SK-N-SH (cell line): ENCODE measurements at regions of chr5 and their contacts with region 1.

Region 1: GRCh38 chr5:60295423-60295822 is 401.9 kb upstream of the PDE4D start:
- DNase-seq: peak; percentile 20
- H3K4me3 ChIP-seq: no peak overlapping the region
- H3K27ac ChIP-seq: no peak overlapping the region
- H3K4me1 ChIP-seq: peaks cover 0 to 7% of the 10 kb centered on the region in 2 experiments; a peak in 1 of 4 replicates
- H3K27me3 ChIP-seq: no peaks in the 10 kb centered on the region
- CTCF ChIP-seq: peak; percentile 68
- EP300 ChIP-seq: no peak
- RAD21 ChIP-seq: peak; percentile 92

Region 2: DNA sequence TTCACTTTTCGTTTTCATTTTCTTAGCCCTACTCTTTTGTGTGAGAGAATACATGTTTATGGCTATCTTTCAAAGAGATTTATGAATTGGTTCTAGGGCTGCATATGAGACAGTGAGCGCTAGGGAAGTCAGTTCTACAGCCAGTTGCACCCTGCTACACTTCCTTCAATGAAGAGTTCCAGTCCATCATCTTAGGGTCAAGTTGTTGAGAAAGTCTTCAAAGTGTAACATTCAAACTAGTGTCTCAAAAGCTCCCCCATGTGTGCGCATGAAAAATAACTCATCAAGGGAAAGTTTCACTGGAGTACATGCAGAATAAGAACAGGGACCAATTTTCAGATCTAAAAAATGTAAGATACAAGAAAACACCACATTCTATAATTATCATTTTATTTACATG is 87.3 kb after region 1 on chr5:
- CTCF ChIA-PET with region 1: interaction called, 36 read pairs
- POLR2A ChIA-PET with region 1: no interaction called
- DNase-seq: peak; percentile 16
- H3K4me3 ChIP-seq: no peak overlapping the region
- H3K27ac ChIP-seq: no peak overlapping the region
- H3K4me1 ChIP-seq: peaks cover 13 to 16% of the 10 kb centered on the region in 2 experiments; a peak in 3 of 4 replicates
- H3K27me3 ChIP-seq: no peaks in the 10 kb centered on the region
- CTCF ChIP-seq: peak; percentile 74
- EP300 ChIP-seq: no peak
- RAD21 ChIP-seq: peak; percentile 88

Region 3: DNA sequence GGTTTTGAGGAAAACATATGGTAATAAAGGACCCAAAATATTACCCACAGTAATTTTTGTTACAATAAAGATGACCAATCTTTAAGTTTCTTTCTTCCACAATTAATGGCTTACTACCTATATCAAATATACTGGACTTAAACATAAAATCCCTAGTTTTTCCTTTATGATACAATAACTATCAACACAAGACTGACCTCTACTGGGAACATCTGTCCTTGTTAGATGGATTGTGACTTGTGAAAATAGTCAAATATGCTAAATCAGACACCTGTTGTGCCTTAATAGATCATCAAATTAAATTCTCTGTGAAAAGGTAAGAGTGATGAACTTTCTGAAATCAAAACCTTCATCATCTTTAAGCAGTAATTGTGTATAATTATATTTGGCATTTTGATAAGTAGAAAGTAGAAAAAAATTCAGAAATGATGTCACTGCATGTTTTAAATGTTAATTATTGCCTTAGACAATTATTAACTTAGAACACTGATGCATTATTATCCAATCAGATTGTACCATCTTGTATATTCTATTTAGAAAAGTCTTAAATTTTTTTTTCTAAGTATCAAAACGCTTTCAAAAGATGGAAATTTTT is 291.0 kb after region 1 on chr5:
- CTCF ChIA-PET with region 1: interaction called, 11 read pairs
- POLR2A ChIA-PET with region 1: no interaction called
- DNase-seq: peak; percentile 6
- H3K4me3 ChIP-seq: no peak overlapping the region
- H3K27ac ChIP-seq: no peak overlapping the region
- H3K4me1 ChIP-seq: no peaks in the 10 kb centered on the region; a peak in 1 of 4 replicates
- H3K27me3 ChIP-seq: no peaks in the 10 kb centered on the region
- CTCF ChIP-seq: peak; percentile 65
- EP300 ChIP-seq: no peak
- RAD21 ChIP-seq: peak; percentile 73

Region 4: GRCh38 chr5:60668686-60669304 is 373.4 kb after region 1 on chr5:
- CTCF ChIA-PET with region 1: interaction called, 10 read pairs
- POLR2A ChIA-PET with region 1: no interaction called
- DNase-seq: peak; percentile 22
- H3K4me3 ChIP-seq: no peak overlapping the region
- H3K27ac ChIP-seq: no peak overlapping the region
- H3K4me1 ChIP-seq: no peaks in the 10 kb centered on the region
- H3K27me3 ChIP-seq: no peaks in the 10 kb centered on the region
- CTCF ChIP-seq: peak; percentile 86
- EP300 ChIP-seq: no peak
- RAD21 ChIP-seq: peak; percentile 57